Tibial artery (tissue), 4 donors: ENCODE measurements at regions of chr12 and their contacts with region 1.

Region 1: GRCh38 chr12:50825372-50825838 is 17.3 kb upstream of the TMPRSS12 start:
- DNase-seq: no peak
- H3K4me3 ChIP-seq: no peak overlapping the region
- H3K27ac ChIP-seq: peak overlapping the region; percentile 51 to 61
- H3K4me1 ChIP-seq: peaks cover 0 to 6% (median 0%) of the 10 kb centered on the region in 4 donors
- H3K27me3 ChIP-seq: no peaks in the 10 kb centered on the region
- CTCF ChIP-seq: peak; percentile 32 to 65

Region 2: DNA sequence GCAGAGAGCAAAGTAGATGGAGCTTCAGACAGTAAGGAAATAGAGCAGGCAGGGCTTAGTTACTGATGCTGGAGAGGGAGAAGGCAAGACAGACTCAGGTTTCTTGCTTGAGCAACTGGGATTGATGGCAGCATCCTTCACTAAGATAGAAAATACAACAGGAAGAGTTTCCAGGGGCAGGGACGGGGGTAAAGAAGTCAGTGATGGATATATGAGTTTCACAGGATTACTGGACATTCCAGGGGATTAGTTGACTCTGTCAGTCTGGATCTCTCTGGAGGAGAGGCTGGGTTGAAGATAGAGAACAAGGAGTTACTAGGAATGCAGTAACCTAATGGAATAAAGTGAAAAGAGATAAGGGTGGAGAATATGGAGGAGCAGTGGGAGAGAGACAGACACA is 136.0 kb before region 1 on chr12:
- intact Hi-C with region 1: no loop called
- DNase-seq: no peak
- H3K4me3 ChIP-seq: no peak overlapping the region
- H3K27ac ChIP-seq: no peak overlapping the region
- H3K4me1 ChIP-seq: no peaks in the 10 kb centered on the region
- H3K27me3 ChIP-seq: no peaks in the 10 kb centered on the region
- CTCF ChIP-seq: no peak

Region 3: DNA sequence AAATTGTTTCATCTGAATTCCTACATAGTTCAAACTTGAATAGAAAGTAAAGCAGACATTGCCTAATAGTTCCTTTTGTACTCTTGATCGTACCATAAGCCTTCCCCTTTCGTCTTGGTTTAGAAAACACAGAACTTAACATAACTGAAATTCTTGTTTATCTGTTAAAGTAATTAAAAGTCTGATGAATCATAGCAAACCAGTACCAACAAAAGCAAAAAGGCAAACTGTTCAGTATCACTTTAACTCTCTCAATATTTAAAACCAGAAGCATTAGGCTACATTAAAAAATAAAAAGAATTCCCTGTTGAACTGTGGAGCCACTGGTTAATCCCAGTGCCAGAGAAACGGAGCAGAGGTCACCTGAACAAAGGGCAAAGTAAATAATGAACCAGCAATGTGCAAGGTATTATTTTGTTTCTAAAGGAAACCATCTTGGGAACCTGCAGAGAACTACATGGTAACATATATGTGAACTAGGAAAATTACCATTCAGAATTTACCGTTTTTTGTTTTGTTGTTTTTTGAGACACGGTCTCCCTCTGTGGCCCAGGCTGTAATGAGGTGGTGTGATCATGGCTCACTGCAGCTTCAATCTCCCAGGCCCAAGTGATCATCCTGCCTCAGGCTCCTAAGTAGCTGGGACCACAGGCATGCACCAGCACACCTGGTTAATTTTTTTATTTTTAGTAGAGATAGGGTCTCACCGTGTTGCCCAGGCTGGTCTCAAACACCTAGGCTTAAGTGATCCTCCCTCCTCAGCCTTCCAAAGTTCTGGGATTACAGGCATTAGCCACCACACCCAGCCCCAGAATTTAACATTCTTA is 109.8 kb after region 1 on chr12:
- intact Hi-C with region 1: loop called (anchors 10 kb)
- DNase-seq: no peak
- H3K4me3 ChIP-seq: no peak overlapping the region
- H3K27ac ChIP-seq: peak overlapping the region; percentile 56 to 70
- H3K4me1 ChIP-seq: peaks cover 0 to 69% (median 25%) of the 10 kb centered on the region in 4 donors
- H3K27me3 ChIP-seq: no peaks in the 10 kb centered on the region
- CTCF ChIP-seq: no peak

Region 4: GRCh38 chr12:50986966-50987737 is 161.7 kb after region 1 on chr12:
- intact Hi-C with region 1: loop called (anchors 2 kb)
- DNase-seq: peak in 1 of 2 donors; percentile 45
- H3K4me3 ChIP-seq: no peak overlapping the region
- H3K27ac ChIP-seq: peak overlapping the region; percentile 73 to 77
- H3K4me1 ChIP-seq: peaks cover 0 to 45% (median 26%) of the 10 kb centered on the region in 4 donors
- H3K27me3 ChIP-seq: no peaks in the 10 kb centered on the region
- CTCF ChIP-seq: peak; percentile 45 to 61